ENCODE measurements at regions of chr1 and their contacts with region 1.

Region 1: GRCh38 chr1:35192853-35193664 is at the start of gene SFPQ:
- DNase-seq: peak; percentile 96
- ATAC-seq: peak; percentile 96
- H3K4me3 Mint-ChIP-seq: peak within 1 kb of the TSS; percentile 90
- H3K27ac Mint-ChIP-seq: peak within 1 kb of the TSS; percentile 98
- H3K4me1 Mint-ChIP-seq: peaks cover 32% of the 10 kb centered on the region
- H3K27me3 Mint-ChIP-seq: no peaks in the 10 kb centered on the region
- total RNA-seq, gene SFPQ: 350 to 389 TPM

Region 2: DNA sequence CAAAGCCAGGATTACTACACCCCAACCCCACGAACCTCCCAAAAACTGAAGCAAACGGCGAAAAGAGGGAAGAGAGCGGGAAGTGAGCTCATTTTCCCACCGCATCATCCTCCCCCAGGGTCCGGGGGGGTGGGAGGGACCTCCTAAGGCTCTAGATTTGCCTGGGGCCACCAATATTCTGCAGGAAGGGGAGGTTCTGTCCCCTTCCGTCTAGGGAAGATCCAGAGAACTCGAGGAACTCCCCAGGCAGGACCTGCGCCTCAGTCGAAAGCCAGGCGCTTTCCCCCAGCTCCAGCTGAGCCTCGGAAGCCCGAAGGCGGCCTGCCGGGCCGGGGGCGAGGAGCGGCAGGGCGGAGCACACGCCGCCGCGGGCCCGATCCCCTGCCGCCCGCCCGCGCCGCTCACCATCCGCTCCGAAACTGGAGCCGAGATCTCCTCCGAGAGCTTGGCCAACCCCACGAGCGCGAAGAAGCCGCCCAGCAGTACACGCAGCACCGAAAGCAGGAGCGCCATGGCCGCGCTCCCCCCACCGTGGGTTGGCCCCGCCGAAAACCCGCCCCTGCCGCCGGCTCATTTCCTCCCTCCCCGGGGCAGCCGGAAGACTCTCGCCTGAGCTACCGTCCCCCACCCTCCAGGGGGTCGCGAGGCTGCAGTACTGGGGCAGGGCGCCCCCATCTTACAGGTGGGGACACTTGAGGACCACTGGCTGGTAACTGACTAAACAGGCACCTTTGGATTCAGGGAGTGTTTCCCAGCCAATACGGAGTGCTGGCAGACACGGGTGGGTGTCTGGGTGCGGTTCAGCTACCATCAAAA is 208.1 kb before region 1 on chr1 and contains the start of gene TMEM35B:
- CTCF ChIA-PET with region 1: interaction called, 3 read pairs
- POLR2A ChIA-PET with region 1: no interaction called
- intact Hi-C with region 1: loop called (anchors 2 to 10 kb)
- DNase-seq: peak; percentile 88
- ATAC-seq: peak; percentile 94
- H3K4me3 Mint-ChIP-seq: peak within 1 kb of the TSS; percentile 93
- H3K27ac Mint-ChIP-seq: peak within 1 kb of the TSS; percentile 93
- H3K4me1 Mint-ChIP-seq: peaks cover 43% of the 10 kb centered on the region
- H3K27me3 Mint-ChIP-seq: no peaks in the 10 kb centered on the region
- total RNA-seq, gene TMEM35B: 15.8 to 19.0 TPM

Region 3: DNA sequence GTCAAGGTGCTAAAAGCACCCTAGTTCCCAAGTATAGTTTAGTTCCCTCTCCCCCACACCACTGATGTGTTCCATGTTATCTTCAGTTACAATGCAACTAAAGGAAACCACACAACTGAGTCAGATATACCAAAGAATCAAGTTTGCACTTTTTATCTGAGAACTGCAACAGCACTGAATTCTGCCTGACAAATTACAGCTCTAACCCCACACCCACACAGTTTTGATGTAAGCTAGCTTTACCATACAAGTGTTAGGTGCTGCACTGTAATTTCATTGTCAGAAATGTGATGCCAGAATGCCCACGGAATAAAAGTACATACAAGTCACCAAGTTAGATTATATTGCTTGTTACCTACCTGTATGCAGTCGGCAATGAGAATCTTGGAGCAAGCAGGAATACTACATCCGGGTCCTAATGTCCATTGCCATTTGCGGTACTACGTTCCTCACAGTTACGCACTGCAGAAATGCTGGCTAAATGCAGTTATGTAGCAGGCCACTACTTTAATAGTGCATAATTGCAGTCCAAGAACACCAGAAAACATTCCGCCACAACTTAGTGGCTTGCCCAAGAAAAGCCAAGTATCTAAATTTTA is 12.2 kb before region 1 on chr1:
- CTCF ChIA-PET with region 1: interaction called, 4 read pairs
- POLR2A ChIA-PET with region 1: interaction called, 23 read pairs
- intact Hi-C with region 1: loop called (anchors 1 kb)
- DNase-seq: peak; percentile 36
- ATAC-seq: peak; percentile 84
- H3K4me3 Mint-ChIP-seq: peak overlapping the region; percentile 7
- H3K27ac Mint-ChIP-seq: peak overlapping the region; percentile 68
- H3K4me1 Mint-ChIP-seq: peaks cover 76% of the 10 kb centered on the region
- H3K27me3 Mint-ChIP-seq: no peaks in the 10 kb centered on the region

Region 4: DNA sequence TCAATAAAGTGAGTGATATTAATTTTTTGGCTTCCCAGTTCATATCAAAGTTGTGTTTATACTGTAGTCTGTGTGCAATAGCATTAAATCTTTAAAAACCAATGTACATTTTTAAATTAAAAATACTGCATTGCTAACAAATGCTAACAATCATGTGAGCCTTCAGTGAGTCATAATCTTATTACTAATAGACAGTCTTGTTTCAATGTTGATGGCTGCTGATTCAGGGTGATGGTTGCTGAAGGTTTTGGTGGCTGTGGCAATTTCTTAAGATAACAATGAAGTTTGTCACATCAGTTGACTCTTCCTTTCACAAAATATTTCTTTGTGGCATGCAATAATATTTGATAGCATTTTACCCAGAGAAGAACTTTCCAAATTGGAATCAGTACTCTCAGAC is 184.5 kb after region 1 on chr1:
- CTCF ChIA-PET with region 1: no interaction called
- POLR2A ChIA-PET with region 1: no interaction called
- intact Hi-C with region 1: no loop called
- DNase-seq: no peak
- ATAC-seq: no peak
- H3K4me3 Mint-ChIP-seq: no peak overlapping the region
- H3K27ac Mint-ChIP-seq: no peak overlapping the region
- H3K4me1 Mint-ChIP-seq: no peaks in the 10 kb centered on the region
- H3K27me3 Mint-ChIP-seq: no peaks in the 10 kb centered on the region

Region 5: GRCh38 chr1:35641233-35641866 is 448.3 kb after region 1 on chr1 and contains the start of gene PSMB2:
- CTCF ChIA-PET with region 1: no interaction called
- POLR2A ChIA-PET with region 1: no interaction called
- intact Hi-C with region 1: loop called in 1 of 2 experiments (anchors 1 kb)
- DNase-seq: peak; percentile 99
- ATAC-seq: peak; percentile 92
- H3K4me3 Mint-ChIP-seq: peak within 1 kb of the TSS; percentile 100
- H3K27ac Mint-ChIP-seq: peak within 1 kb of the TSS; percentile 100
- H3K4me1 Mint-ChIP-seq: peaks cover 26% of the 10 kb centered on the region
- H3K27me3 Mint-ChIP-seq: peaks cover 18% of the 10 kb centered on the region
- total RNA-seq, gene PSMB2: 97.1 to 125 TPM

Region 6: DNA sequence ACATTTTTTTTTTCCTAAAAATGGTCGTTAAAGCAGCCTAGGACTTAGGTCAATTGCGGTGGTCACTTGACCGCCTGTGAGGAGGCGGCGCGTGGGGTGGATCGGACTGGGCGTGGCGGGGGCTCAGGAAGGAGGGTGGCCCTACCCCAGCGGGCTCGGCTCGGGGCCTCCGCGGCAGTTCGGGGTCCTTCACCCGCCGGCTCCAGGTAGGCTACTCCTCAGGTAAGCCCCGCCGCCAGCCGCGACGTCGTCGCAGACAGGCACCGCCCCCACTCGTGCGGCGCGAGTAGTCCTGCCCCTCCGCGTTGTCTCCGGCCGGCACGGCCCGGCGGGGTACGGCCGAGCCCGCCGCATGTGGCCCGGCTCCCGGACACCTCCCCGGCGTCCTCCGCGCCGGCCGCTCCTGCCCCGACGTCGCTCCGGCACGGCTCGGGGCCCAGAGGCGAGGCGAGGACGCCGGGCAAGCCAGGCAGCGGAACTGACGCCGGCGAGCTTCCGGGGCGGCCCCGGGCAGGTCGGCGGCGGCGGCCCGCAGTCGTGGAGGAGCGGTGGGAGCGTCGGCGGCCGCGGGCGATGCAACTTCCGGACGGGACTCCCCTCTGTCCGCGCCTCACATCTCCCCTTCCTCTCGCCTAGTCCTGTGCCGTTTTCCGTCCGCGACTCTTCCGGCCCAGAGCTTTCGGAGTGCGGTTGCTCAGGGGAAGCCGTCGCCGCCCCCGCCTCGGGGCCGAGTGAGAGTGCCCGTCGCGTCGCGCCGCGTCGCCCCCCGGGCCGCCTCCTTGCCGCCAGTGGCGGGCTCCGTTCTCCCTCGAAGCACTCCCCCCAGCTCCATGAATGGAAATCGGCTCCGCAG is 737.8 kb after region 1 on chr1 and contains the start of gene AGO3:
- CTCF ChIA-PET with region 1: no interaction called
- POLR2A ChIA-PET with region 1: no interaction called
- intact Hi-C with region 1: loop called in 1 of 2 experiments (anchors 2 kb)
- DNase-seq: peak; percentile 95
- ATAC-seq: peak; percentile 95
- H3K4me3 Mint-ChIP-seq: peak within 1 kb of the TSS; percentile 92
- H3K27ac Mint-ChIP-seq: peak within 1 kb of the TSS; percentile 94
- H3K4me1 Mint-ChIP-seq: peaks cover 37% of the 10 kb centered on the region
- H3K27me3 Mint-ChIP-seq: no peaks in the 10 kb centered on the region
- total RNA-seq, gene AGO3: 23.3 to 33.8 TPM

Region 7: DNA sequence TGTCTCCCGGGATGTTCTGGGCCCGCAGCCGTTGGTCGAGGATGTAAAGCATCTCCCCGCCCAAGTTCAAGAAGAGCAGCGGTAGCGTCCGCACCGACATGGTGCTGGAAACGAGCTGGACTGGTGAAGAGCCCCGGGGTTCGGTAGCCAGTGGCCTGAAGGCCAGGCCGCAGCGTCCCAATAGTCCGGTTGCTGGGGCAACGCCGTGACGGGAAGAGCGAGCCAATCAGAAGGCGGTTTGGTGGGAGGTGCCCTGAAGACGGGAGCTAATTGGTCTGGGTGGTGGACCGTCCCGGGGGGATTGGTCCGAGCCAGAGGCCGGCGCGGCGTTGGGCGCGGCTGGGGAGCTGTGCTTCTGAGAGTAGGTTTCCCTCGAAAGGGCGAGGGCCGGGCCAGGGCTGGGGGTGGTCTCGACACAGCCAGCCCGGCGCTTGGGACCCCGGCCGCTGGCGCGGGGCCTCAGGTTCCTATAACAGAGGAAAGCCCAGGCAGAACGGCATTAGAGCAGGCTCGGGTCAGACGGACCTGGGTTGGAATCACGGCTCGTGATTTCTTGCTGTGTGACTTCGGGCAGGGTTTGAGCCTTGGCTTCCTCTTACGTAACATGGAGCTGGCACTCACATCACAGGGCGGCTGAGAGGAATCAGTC is 1257.3 kb after region 1 on chr1 and contains the start of gene OSCP1:
- CTCF ChIA-PET with region 1: no interaction called
- POLR2A ChIA-PET with region 1: no interaction called
- intact Hi-C with region 1: loop called in 1 of 2 experiments (anchors 10 kb)
- DNase-seq: peak; percentile 91
- ATAC-seq: peak; percentile 98
- H3K4me3 Mint-ChIP-seq: peak within 1 kb of the TSS; percentile 83
- H3K27ac Mint-ChIP-seq: peak within 1 kb of the TSS; percentile 83
- H3K4me1 Mint-ChIP-seq: peaks cover 16% of the 10 kb centered on the region
- H3K27me3 Mint-ChIP-seq: no peaks in the 10 kb centered on the region
- total RNA-seq, gene OSCP1: 2.2 to 2.8 TPM